Activated CD8-positive, alpha-beta T cell treated with anti-CD3 and anti-CD28 coated beads for 36 hours (primary cell): ENCODE measurements at regions of chr5 and their contacts with region 1.

Region 1: GRCh38 chr5:50440651-50441492 is at the start of gene EMB:
- DNase-seq: peak; percentile 86
- ATAC-seq: peak; percentile 72
- H3K4me3 Mint-ChIP-seq: peak within 1 kb of the TSS; percentile 84
- H3K27ac Mint-ChIP-seq: peak within 1 kb of the TSS; percentile 90
- H3K4me1 Mint-ChIP-seq: peaks cover 65% of the 10 kb centered on the region
- H3K27me3 Mint-ChIP-seq: no peaks in the 10 kb centered on the region
- CTCF ChIP-seq: no peak
- total RNA-seq, gene EMB: 55.7 to 67.1 TPM

Region 2: GRCh38 chr5:50415912-50416311 is 25.0 kb before region 1 on chr5:
- CTCF ChIA-PET with region 1: no interaction called
- POLR2A ChIA-PET with region 1: no interaction called
- intact Hi-C with region 1: no loop called
- DNase-seq: no peak
- ATAC-seq: peak; percentile 66
- H3K4me3 Mint-ChIP-seq: no peak overlapping the region
- H3K27ac Mint-ChIP-seq: peak overlapping the region; percentile 38
- H3K4me1 Mint-ChIP-seq: peaks cover 69% of the 10 kb centered on the region
- H3K27me3 Mint-ChIP-seq: no peaks in the 10 kb centered on the region
- CTCF ChIP-seq: no peak

Region 3: DNA sequence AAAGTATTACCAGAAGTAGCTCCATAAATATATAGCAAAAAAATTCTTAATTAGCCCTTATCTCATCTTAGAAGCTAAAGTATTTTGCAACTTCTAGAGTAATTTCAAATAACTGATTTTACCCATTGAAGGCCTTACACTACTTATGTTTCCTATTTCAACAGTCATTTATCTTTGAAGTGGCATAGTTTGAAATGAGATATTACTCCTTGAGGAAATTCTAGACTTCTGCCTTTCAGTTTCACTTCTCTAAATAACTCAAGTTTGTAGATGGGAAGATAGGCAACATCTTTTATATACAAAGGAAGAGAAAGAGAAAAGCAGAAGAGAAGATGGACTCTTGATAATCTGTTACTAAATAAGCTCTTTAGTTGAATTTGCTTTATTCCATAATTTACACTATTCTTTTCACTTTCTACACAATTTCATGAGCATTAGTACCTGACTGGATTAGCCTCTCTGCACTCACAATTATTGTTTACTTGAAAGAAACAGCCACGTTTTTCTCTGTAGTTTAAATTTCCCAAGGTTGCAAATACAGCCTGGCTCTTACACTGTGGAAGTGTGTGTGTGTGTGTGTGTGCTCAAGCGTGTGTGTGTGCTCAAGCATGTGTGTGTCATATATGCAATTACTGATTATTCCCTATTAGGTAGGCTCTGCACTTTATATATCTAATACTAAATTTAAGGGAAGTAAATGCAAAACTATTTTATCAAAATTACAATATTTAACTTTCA is 60.8 kb after region 1 on chr5:
- CTCF ChIA-PET with region 1: no interaction called
- POLR2A ChIA-PET with region 1: no interaction called
- intact Hi-C with region 1: loop called (anchors 5 kb)
- DNase-seq: no peak
- ATAC-seq: peak; percentile 82
- H3K4me3 Mint-ChIP-seq: no peak overlapping the region
- H3K27ac Mint-ChIP-seq: peak overlapping the region; percentile 49
- H3K4me1 Mint-ChIP-seq: peaks cover 21% of the 10 kb centered on the region
- H3K27me3 Mint-ChIP-seq: no peaks in the 10 kb centered on the region
- CTCF ChIP-seq: no peak

Region 4: DNA sequence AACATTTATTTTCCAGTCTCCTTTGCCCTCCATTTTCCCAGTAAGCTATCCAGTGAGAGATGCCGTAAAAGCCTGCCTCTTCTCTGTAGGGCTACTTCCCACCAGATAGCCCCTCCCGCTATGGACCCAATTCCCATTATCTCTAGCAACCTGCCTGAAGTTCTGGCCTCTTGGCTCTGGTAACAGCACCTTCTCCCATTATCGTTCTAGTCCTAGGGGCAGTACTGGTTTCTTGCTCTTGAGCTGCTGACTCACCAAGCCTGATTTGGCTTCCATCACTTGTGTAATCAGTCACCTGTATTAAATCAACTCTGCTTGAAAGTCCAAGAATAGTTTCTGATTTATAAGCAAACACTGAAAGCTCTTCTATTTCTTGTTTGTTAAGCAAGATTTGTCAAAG is 182.8 kb after region 1 on chr5:
- CTCF ChIA-PET with region 1: no interaction called
- POLR2A ChIA-PET with region 1: no interaction called
- intact Hi-C with region 1: no loop called
- DNase-seq: no peak
- ATAC-seq: no peak
- H3K4me3 Mint-ChIP-seq: no peak overlapping the region
- H3K27ac Mint-ChIP-seq: no peak overlapping the region
- H3K4me1 Mint-ChIP-seq: peaks cover 5% of the 10 kb centered on the region
- H3K27me3 Mint-ChIP-seq: no peaks in the 10 kb centered on the region
- CTCF ChIP-seq: no peak

Region 5: DNA sequence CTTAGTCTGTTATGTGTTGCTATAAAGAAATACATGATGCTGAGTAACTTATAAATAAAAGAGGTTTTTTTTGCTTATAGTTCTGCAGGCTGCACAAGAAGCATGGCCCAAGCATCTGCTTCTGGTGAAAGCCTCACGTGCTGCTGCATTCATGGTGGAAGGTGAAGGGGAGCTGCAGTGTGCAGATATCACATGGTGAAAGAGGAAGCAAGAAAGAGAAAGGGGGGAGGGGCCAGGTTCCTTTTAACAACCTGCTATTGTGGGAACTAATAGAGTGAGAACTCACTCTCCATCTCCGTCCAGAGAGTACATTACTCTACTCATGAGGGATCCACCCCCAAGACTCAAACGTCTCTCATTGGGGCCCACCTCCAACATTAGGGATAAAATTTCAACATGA is 213.1 kb after region 1 on chr5:
- CTCF ChIA-PET with region 1: no interaction called
- POLR2A ChIA-PET with region 1: no interaction called
- intact Hi-C with region 1: no loop called
- DNase-seq: no peak
- ATAC-seq: no peak
- H3K4me3 Mint-ChIP-seq: no peak overlapping the region
- H3K27ac Mint-ChIP-seq: no peak overlapping the region
- H3K4me1 Mint-ChIP-seq: peaks cover 34% of the 10 kb centered on the region
- H3K27me3 Mint-ChIP-seq: no peaks in the 10 kb centered on the region
- CTCF ChIP-seq: no peak

Region 6: DNA sequence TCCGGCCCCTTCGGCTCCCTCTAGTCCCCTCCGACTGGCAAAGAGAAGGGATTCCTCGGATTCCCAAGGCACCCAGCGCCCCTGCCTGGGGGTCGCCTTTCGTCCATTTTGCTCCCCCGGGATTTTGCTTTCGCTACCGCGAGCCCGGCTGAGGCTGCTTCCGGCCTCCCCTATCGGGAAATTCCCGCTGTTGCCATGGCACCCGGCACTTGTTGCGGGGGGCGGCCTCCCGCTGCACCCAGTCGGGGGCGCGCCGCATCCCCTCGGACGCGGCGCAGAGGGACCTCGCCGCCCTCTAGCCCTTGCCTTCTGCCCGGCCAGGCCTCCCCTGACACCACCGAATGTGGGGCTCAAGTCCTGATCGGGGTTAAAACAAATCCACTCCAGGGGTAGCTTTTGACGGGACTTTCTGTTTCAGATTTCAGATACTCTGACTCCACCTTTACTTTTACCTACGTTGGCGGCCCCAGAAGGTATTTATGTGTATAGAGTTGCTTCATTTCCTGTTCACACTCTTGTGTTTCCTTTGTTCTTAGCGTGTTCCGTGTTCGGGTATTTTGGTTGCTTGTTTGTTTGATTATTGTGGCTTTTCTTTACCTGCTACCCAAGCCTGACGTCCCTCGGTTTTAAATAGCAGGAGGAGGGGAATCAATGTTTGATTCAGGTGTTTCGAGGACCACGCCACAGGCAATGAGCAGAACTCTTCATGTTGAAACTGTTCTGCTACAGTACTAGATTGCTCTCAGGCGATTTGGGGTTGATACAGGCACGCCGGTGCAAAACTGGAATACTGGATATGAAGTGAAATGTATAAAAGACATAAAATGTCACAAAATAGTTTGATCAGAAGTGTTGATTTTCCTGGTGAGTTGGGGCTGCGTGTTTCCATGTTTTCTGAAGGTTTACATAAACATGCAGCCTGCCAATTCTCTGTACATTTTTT is 227.1 kb after region 1 on chr5:
- CTCF ChIA-PET with region 1: no interaction called
- POLR2A ChIA-PET with region 1: interaction called, 3 read pairs
- intact Hi-C with region 1: loop called (anchors 5 kb)
- DNase-seq: peak; percentile 90
- ATAC-seq: peak; percentile 76
- H3K4me3 Mint-ChIP-seq: peak overlapping the region; percentile 90
- H3K27ac Mint-ChIP-seq: peak overlapping the region; percentile 99
- H3K4me1 Mint-ChIP-seq: peaks cover 43% of the 10 kb centered on the region
- H3K27me3 Mint-ChIP-seq: no peaks in the 10 kb centered on the region
- CTCF ChIP-seq: no peak